Activated CD8-positive, alpha-beta T cell treated with anti-CD3 and anti-CD28 coated beads for 36 hours (primary cell): ENCODE measurements at regions of chr3 and their contacts with region 1.

Region 1: DNA sequence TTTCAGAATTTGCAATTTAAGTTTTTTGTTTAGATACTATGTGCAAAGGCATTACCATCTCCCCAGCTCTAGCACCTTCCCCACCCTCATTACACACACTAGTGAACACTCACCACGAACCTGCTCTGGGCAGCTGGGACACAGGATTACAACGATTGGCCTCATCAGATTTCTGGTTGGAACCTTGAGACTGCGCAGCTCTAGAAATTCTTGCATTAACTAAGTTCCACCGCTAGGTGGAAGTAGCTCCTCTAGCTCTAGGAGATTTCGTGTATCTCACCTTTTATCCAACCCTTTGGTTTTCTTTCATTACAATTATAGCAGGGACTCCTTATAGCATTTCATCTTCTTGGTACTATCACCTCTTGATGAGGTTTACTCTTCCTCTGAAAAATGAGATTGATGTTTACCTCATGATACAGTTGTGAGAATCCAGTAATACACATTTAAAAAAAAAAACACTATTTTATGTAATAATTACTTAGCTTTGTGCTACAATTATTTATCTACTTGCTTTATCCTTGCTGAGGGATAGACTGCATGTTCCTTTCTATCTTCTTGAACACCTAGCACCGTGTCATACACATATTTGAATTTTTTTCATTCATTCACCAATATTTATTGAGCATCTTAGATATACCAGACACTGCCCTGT is 28.7 kb upstream of the PLOD2 start:
- DNase-seq: peak; percentile 4
- ATAC-seq: peak; percentile 71
- H3K4me3 Mint-ChIP-seq: no peak overlapping the region
- H3K27ac Mint-ChIP-seq: no peak overlapping the region
- H3K4me1 Mint-ChIP-seq: no peaks in the 10 kb centered on the region
- H3K27me3 Mint-ChIP-seq: peaks cover 2% of the 10 kb centered on the region
- CTCF ChIP-seq: peak; percentile 71

Region 2: DNA sequence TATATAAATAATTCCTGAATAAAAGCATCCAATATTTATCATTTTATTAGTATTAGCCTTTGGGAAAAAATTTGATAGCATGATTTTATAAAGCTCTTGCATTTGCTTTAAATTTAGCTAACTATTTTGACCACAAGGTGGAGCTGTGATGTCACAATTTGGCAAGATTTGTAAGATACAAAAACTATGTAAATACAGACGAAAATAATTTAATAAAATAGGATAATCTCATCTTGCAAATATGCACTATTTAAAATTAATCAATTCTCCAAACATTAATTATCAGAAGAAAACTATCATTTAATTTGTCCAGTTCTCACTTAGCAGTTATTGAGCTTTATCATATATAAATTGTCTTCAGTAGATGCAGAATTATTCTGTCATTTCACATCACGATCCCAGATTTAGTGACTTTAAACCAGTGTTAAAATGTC is 124.1 kb before region 1 on chr3:
- CTCF ChIA-PET with region 1: interaction called, 40 read pairs
- POLR2A ChIA-PET with region 1: no interaction called
- intact Hi-C with region 1: loop called (anchors 10 kb)
- DNase-seq: peak; percentile 23
- ATAC-seq: no peak
- H3K4me3 Mint-ChIP-seq: no peak overlapping the region
- H3K27ac Mint-ChIP-seq: no peak overlapping the region
- H3K4me1 Mint-ChIP-seq: no peaks in the 10 kb centered on the region
- H3K27me3 Mint-ChIP-seq: no peaks in the 10 kb centered on the region
- CTCF ChIP-seq: peak; percentile 82

Region 3: GRCh38 chr3:146166450-146167225 is 23.0 kb before region 1 on chr3:
- CTCF ChIA-PET with region 1: interaction called, 14 read pairs
- POLR2A ChIA-PET with region 1: no interaction called
- intact Hi-C with region 1: no loop called
- DNase-seq: no peak
- ATAC-seq: no peak
- H3K4me3 Mint-ChIP-seq: no peak overlapping the region
- H3K27ac Mint-ChIP-seq: no peak overlapping the region
- H3K4me1 Mint-ChIP-seq: peaks cover 4% of the 10 kb centered on the region
- H3K27me3 Mint-ChIP-seq: peaks cover 24% of the 10 kb centered on the region
- CTCF ChIP-seq: no peak

Region 4: GRCh38 chr3:146203776-146204175 is 14.1 kb after region 1 on chr3:
- CTCF ChIA-PET with region 1: interaction called, 10 read pairs
- POLR2A ChIA-PET with region 1: no interaction called
- intact Hi-C with region 1: no loop called
- DNase-seq: no peak
- ATAC-seq: no peak
- H3K4me3 Mint-ChIP-seq: no peak overlapping the region
- H3K27ac Mint-ChIP-seq: no peak overlapping the region
- H3K4me1 Mint-ChIP-seq: no peaks in the 10 kb centered on the region
- H3K27me3 Mint-ChIP-seq: peaks cover 10% of the 10 kb centered on the region
- CTCF ChIP-seq: no peak

Region 5: DNA sequence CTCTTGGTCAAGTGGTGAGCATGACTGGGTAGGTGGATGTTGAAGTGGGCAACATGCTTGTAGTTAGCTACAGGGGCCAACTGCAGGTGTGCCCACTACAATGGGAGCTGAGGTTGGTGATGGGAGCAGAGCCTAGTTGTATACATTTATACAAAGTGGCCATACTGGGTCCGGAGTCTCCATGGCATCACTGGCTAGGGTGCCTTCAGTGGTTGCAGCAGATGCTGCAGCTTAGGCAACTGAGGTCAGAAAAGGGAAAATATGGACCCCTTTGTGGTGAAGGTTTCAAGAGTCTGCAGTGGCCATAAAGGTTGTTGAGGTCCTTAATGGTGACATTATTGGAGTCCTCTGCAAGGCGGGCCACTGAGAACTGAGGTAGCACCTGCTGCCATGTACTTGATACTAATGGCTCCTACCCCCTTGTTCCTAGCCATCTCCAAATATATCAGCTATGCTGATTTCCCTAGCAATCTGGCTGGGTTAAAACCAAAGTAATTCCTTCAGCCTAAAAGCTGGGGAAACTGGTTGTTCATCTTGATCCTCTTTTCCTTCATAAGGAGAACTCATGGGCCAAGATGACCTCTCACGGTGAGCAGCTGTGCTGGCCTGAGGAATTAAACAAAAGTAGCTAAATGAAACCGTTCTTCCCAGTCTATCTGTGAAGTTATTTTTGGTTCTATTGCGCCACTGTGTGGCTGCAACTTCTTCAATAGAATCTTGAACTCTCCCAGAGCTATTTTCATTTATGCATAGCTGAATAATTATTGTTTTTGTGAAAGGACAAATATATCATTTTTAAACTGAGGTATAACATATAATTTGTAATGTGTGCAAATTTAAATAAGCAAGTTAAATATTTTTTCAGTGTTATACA is 137.3 kb after region 1 on chr3:
- CTCF ChIA-PET with region 1: interaction called, 15 read pairs
- POLR2A ChIA-PET with region 1: no interaction called
- intact Hi-C with region 1: no loop called
- DNase-seq: peak; percentile 7
- ATAC-seq: no peak
- H3K4me3 Mint-ChIP-seq: no peak overlapping the region
- H3K27ac Mint-ChIP-seq: no peak overlapping the region
- H3K4me1 Mint-ChIP-seq: no peaks in the 10 kb centered on the region
- H3K27me3 Mint-ChIP-seq: peaks cover 2% of the 10 kb centered on the region
- CTCF ChIP-seq: no peak

Region 6: GRCh38 chr3:146577662-146578061 is 388.0 kb after region 1 on chr3:
- CTCF ChIA-PET with region 1: interaction called, 23 read pairs
- POLR2A ChIA-PET with region 1: no interaction called
- intact Hi-C with region 1: no loop called
- DNase-seq: peak; percentile 62
- ATAC-seq: no peak
- H3K4me3 Mint-ChIP-seq: no peak overlapping the region
- H3K27ac Mint-ChIP-seq: no peak overlapping the region
- H3K4me1 Mint-ChIP-seq: peaks cover 2% of the 10 kb centered on the region
- H3K27me3 Mint-ChIP-seq: no peaks in the 10 kb centered on the region
- CTCF ChIP-seq: peak; percentile 70

Region 7: DNA sequence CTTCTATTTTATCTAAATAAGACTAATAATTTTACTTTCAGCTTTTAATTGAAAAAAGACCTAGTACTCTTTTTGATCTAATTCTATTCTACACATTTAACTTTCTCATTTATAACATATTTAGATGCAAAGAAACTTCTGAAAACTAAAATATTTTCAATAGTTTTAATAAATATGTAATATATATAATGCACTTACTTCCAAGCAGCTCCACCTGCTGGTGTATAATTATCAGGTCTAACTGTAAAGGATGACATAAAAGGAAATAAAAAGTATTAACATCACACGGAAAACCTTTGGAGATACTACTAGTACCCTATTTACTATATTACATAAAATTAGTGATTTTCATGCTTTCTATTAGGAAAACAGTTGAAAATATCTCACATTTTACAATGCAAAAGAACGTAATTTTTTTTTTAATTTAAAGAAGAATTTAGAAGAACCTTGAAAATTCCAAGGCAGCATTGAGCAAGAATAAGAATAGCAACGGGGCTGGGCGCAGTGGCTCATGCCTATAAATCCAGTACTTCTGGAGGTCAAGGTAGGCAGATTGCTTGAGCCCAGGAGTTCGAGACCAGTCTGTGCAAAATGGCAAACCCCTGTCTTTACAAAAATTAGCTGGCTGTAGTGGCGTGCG is 405.3 kb after region 1 on chr3:
- CTCF ChIA-PET with region 1: interaction called, 10 read pairs
- POLR2A ChIA-PET with region 1: no interaction called
- intact Hi-C with region 1: no loop called
- DNase-seq: no peak
- ATAC-seq: no peak
- H3K4me3 Mint-ChIP-seq: no peak overlapping the region
- H3K27ac Mint-ChIP-seq: no peak overlapping the region
- H3K4me1 Mint-ChIP-seq: no peaks in the 10 kb centered on the region
- H3K27me3 Mint-ChIP-seq: peaks cover 5% of the 10 kb centered on the region
- CTCF ChIP-seq: peak; percentile 58